Posterior vena cava (tissue), 2 donors: ENCODE measurements at regions of chr2 and their contacts with region 1.

Region 1: DNA sequence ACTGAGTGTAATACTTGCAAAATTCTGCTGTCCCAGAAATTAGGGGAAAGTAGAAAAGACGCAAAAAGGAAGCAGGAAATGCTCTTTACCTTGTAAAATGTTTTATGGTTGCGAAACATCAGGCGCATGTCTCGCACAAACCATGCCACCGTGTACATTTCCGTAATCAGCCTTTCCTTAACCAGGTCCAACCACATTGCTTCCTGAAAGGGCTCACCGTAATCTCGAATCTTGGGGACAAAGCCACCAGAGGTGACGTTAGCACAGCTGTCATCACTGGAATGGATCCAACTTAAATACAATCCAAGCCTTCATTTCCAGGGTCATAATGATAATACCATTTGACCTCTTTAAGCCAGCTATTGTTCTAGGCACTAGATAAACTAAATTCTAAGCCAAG is 49.3 kb downstream of the SP110 start:
- DNase-seq: no peak

Region 2: GRCh38 chr2:230202430-230203109 is 32.0 kb after region 1 on chr2:
- intact Hi-C with region 1: loop called in 1 of 2 experiments (anchors 1 kb)
- DNase-seq: no peak

Region 3: GRCh38 chr2:231819447-231820042 is 1649.0 kb after region 1 on chr2:
- intact Hi-C with region 1: no loop called
- DNase-seq: no peak